Lower leg skin (tissue), 4 donors: ENCODE measurements at regions of chr3 and their contacts with region 1.

Region 1: GRCh38 chr3:14178247-14179113 is at the starts of genes LSM3 and XPC:
- DNase-seq: peak; percentile 97 to 99
- H3K4me3 ChIP-seq: peak within 1 kb of the TSS; percentile 72
- CTCF ChIP-seq: peak in 1 of 3 donors; percentile 12
- POLR2A ChIP-seq: peak in 1 of 2 donors; percentile 84
- total RNA-seq, gene LSM3: 7.6 to 11.4 (median 8.2) TPM
- total RNA-seq, gene XPC: 50.6 to 110 (median 76.2) TPM

Region 2: GRCh38 chr3:13564751-13565560 is 613.5 kb before region 1 on chr3:
- intact Hi-C with region 1: no loop called
- DNase-seq: no peak
- H3K4me3 ChIP-seq: no peak overlapping the region
- CTCF ChIP-seq: no peak
- POLR2A ChIP-seq: no peak

Region 3: GRCh38 chr3:13792512-13793371 is 385.7 kb before region 1 on chr3:
- intact Hi-C with region 1: no loop called
- DNase-seq: no peak
- H3K4me3 ChIP-seq: no peak overlapping the region
- CTCF ChIP-seq: no peak
- POLR2A ChIP-seq: no peak

Region 4: GRCh38 chr3:14124615-14125190 is 53.8 kb before region 1 on chr3 and contains the starts of genes CHCHD4 and TMEM43:
- intact Hi-C with region 1: loop called (anchors 10 kb)
- DNase-seq: peak; percentile 99 to 100
- H3K4me3 ChIP-seq: peak within 1 kb of the TSS; percentile 99
- CTCF ChIP-seq: peak in 1 of 3 donors; percentile 6
- POLR2A ChIP-seq: no peak
- total RNA-seq, gene CHCHD4: 8.4 to 14.6 (median 11.8) TPM
- total RNA-seq, gene TMEM43: 184 to 225 (median 202) TPM